ENCODE measurements at regions of chr3 and their contacts with region 1.

Region 1: GRCh38 chr3:101381809-101382208 is 61.4 kb upstream of the IMPG2 start:
- DNase-seq: no peak
- ATAC-seq: peak in 1 of 4 donors; percentile 59
- H3K4me3 ChIP-seq: no peak overlapping the region
- H3K27ac ChIP-seq: peak overlapping the region in 1 of 12 donors; percentile 17
- H3K4me1 ChIP-seq: peaks cover 0 to 54% (median 23%) of the 10 kb centered on the region in 12 donors
- H3K27me3 ChIP-seq: no peaks in the 10 kb centered on the region
- CTCF ChIP-seq: peak; percentile 19 to 65 (median 48)
- POLR2A ChIP-seq: no peak

Region 2: GRCh38 chr3:100737334-100737733 is 644.5 kb before region 1 on chr3:
- intact Hi-C with region 1: loop called in 1 of 10 experiments (anchors 10 kb)
- DNase-seq: no peak
- ATAC-seq: no peak
- H3K4me3 ChIP-seq: no peak overlapping the region
- H3K27ac ChIP-seq: no peak overlapping the region
- H3K4me1 ChIP-seq: peaks cover 0 to 32% (median 5%) of the 10 kb centered on the region in 12 donors
- H3K27me3 ChIP-seq: no peaks in the 10 kb centered on the region
- CTCF ChIP-seq: peak in 10 of 12 donors; percentile 9 to 50 (median 34)
- POLR2A ChIP-seq: no peak

Region 3: DNA sequence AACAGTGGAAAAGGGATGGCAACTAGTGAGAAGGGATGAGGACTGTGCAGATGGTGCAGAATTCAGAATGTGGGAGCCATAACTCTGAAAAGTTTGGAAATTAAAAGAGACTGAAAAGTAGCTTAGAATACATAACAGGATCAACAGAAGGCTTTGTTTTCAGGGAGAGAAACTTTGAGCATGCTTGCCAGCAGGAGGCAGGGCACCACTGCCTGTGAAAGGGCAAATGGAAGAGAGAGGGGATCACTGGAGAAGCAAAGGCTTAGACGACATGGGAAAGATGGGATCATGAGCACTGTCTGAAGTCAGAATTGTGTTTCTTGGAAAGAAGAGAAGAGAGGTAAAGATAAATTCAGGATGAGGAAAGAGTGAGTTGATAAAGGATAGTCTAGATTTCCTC is 488.2 kb before region 1 on chr3:
- intact Hi-C with region 1: loop called in 1 of 10 experiments (anchors 10 kb)
- DNase-seq: no peak
- ATAC-seq: peak; percentile 47 to 59 (median 50)
- H3K4me3 ChIP-seq: no peak overlapping the region
- H3K27ac ChIP-seq: peak overlapping the region in 1 of 12 donors; percentile 61
- H3K4me1 ChIP-seq: peaks cover 0 to 10% (median 0%) of the 10 kb centered on the region in 12 donors
- H3K27me3 ChIP-seq: no peaks in the 10 kb centered on the region
- CTCF ChIP-seq: peak in 10 of 12 donors; percentile 18 to 53 (median 44)
- POLR2A ChIP-seq: no peak

Region 4: DNA sequence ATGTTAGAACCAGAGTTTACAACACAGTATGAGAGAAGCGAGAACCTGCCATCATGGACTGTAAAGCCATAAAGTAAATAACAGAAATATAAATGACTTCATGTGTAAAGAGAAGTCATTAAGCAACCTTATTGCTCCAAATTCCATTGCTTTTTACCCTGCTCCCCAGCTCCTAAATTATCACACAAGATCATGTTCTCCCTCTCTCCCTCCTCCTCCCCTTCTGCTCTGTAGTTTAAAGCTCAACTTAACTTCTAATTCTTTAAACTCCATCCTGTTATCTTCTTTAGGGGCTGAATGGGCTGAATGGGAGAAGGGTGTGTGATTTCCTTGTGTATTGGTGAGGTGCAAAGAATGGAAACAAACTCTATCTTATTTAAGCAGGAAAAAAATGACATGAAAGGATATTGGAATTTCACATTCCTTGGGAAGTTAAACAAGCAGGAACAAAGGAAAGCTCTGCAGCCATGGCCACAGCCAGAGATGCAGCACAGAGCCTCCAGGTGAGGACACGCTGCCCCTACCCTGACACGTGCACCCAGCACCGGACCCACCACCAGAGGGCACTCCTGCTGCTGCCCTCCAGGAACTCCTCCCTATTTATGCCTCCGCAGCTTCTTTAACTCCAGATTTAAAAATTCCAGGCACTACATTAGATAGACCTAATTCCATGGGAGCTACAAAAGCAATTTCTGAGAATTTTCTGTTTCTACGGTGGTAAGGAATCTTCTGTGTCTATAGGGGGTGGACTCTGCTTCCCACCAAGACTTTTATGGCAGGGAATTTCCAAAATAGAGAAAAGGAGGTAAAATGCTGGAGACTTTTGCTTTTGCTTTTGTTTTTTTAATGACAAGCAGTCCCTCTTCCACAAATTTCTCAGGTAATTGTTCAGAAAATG is 311.7 kb before region 1 on chr3:
- intact Hi-C with region 1: loop called in 2 of 10 experiments (anchors 2 to 5 kb)
- DNase-seq: peak; percentile 13 to 80 (median 53)
- ATAC-seq: peak; percentile 55 to 82 (median 78)
- H3K4me3 ChIP-seq: no peak overlapping the region
- H3K27ac ChIP-seq: no peak overlapping the region
- H3K4me1 ChIP-seq: peaks cover 0 to 16% (median 0%) of the 10 kb centered on the region in 12 donors
- H3K27me3 ChIP-seq: no peaks in the 10 kb centered on the region
- CTCF ChIP-seq: peak; percentile 51 to 72 (median 64)
- POLR2A ChIP-seq: no peak

Region 5: GRCh38 chr3:101229681-101230080 is 152.1 kb before region 1 on chr3:
- intact Hi-C with region 1: loop called in 6 of 10 experiments (anchors 5 to 10 kb)
- DNase-seq: no peak
- ATAC-seq: peak in 2 of 4 donors; percentile 29 to 48
- H3K4me3 ChIP-seq: no peak overlapping the region
- H3K27ac ChIP-seq: no peak overlapping the region
- H3K4me1 ChIP-seq: no peaks in the 10 kb centered on the region
- H3K27me3 ChIP-seq: no peaks in the 10 kb centered on the region
- CTCF ChIP-seq: peak in 6 of 12 donors; percentile 12 to 42 (median 24)
- POLR2A ChIP-seq: no peak

Region 6: DNA sequence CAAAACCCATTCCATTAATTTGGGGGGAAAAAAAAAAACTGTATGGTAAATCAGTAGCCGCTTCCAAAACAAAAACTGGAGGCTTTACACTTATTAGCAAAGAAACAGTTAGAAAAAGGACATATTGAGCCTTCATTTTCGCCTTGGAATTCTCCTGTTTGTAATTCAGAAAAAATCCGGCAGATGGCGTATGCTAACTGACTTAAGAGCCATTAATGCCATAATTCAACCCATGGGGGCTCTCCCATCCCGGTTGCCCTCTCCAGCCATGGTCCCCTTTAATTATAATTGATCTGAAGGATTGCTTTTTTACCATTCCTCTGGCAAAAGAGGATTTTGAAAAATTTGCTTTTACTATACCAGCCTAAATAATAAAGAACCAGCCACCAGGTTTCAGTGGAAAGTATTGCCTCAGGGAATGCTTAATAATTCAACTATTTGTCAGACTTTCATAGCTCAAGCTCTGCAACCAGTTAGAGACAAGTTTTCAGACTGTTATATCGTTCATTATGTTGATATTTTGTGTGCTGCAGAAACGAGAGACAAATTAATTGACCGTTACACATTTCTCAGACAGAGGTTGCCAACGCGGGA is 314.1 kb after region 1 on chr3:
- intact Hi-C with region 1: no loop called
- DNase-seq: no peak
- ATAC-seq: no peak
- H3K4me3 ChIP-seq: no peak overlapping the region
- H3K27ac ChIP-seq: no peak overlapping the region
- H3K4me1 ChIP-seq: peaks cover 0 to 5% (median 0%) of the 10 kb centered on the region in 12 donors
- H3K27me3 ChIP-seq: no peaks in the 10 kb centered on the region
- CTCF ChIP-seq: peak; percentile 58 to 82 (median 70)
- POLR2A ChIP-seq: no peak

Region 7: DNA sequence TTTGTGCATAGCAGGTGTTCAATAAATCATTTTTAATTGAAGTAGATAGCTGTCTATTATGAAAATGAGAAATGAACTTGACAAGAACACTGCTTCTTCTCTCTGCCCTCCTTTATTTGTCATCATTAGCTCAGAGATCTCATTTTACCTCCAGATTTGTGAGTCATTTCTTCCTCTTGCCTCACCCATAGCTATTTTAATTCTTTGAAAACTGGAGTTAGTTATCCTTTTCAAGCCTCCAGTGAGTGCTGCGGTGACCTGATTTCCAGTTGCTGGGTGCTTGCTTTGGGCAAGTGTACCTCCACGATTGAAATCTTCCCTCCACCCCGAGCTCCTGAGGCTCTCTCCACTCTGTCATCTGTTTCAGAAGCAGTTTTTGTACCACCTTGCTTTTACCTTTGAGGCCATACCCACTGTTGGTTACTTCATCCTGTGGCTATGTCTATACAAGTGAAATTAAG is 582.1 kb after region 1 on chr3:
- intact Hi-C with region 1: no loop called
- DNase-seq: no peak
- ATAC-seq: peak in 3 of 4 donors; percentile 24 to 68 (median 48)
- H3K4me3 ChIP-seq: no peak overlapping the region
- H3K27ac ChIP-seq: peak overlapping the region in 1 of 12 donors; percentile 34
- H3K4me1 ChIP-seq: no peaks in the 10 kb centered on the region
- H3K27me3 ChIP-seq: no peaks in the 10 kb centered on the region
- CTCF ChIP-seq: no peak
- POLR2A ChIP-seq: no peak

Measured in heart left ventricle (tissue), 16 donors.